Tibial artery (tissue), 4 donors: ENCODE measurements at regions of chr10 and their contacts with region 1.

Region 1: GRCh38 chr10:79068562-79069324 is at the start of gene ZMIZ1:
- DNase-seq: peak; percentile 94 to 95
- H3K4me3 ChIP-seq: peak within 1 kb of the TSS; percentile 70 to 95
- H3K27ac ChIP-seq: peak within 1 kb of the TSS; percentile 97 to 100
- H3K4me1 ChIP-seq: peaks cover 9 to 49% (median 37%) of the 10 kb centered on the region in 4 donors
- H3K27me3 ChIP-seq: no peaks in the 10 kb centered on the region
- CTCF ChIP-seq: peak; percentile 2 to 24

Region 2: DNA sequence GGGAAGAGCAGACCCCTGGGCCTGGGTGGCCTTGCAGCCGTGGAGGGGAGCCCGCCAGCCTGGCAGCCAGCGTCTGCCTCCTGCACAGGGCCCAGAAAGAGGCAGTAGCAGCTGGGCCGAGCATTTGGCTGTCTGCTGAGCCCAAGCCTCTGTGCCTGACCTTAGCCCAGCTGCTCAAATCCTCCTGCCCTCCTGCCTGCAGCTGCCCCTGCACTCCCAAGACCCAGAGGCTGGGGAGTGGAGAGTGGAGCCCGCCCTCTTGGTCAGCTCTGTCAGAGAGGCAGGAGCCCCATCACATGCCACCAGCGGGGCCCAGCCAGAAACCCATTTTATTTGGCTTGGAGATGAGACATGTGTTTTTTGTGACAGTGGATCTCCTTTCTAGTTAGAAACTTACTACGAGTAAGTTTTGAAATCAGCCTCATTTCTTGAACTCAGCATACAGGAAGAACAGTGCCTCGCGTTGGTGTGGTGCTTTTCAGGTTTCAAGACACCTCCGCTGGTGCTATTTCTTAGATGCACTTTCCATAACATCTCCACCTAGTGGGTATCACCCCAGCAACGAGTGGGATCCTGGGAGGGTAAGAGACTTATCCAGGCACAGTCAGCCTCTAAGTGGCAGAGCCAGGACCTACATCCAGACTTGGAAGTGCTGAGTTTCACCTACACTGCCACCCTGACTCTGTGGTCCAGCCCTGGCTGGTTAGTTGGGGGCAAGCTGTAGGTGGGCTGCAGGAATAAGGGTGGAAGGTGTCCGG is 558.0 kb before region 1 on chr10:
- intact Hi-C with region 1: no loop called
- DNase-seq: peak in 1 of 2 donors; percentile 59
- H3K4me3 ChIP-seq: no peak overlapping the region
- H3K27ac ChIP-seq: peak overlapping the region; percentile 42 to 47
- H3K4me1 ChIP-seq: peaks cover 0 to 68% (median 39%) of the 10 kb centered on the region in 4 donors
- H3K27me3 ChIP-seq: no peaks in the 10 kb centered on the region
- CTCF ChIP-seq: no peak

Region 3: DNA sequence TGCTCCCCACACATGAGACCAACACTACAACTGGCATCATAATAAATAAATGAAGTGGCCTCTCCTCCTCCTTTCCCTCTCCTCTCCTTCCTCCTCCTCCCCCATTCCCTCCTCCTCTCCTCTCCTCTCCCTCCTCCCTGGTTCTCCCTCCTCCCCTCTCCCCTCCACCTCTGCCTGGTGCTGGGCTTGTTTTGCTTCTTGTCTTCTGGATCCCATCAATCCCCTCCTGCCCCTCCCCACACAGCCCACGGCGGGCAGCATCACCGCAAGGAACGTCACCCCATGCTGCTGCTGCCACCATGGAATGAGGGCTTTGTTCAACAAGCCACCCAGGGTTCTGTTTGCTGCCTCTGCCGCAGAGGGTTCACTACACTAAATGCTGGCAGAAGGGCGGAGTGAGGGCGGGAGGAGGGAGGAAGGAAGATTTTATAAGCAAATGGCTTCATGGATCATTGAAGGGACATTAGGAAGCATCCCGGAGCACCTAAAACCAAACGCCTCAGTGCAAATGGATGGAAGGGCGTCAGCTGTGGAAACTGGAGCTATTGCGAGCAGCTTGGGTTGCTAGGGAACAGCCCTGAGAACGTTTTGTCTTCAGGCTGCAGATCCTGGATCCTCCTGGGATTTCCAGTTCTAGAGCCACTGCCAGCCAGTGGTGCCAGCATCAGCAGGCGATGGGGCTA is 379.7 kb before region 1 on chr10:
- intact Hi-C with region 1: loop called (anchors 5 kb)
- DNase-seq: peak; percentile 78 to 95
- H3K4me3 ChIP-seq: peak overlapping the region in 1 of 2 donors; percentile 30
- H3K27ac ChIP-seq: peak overlapping the region; percentile 76 to 87
- H3K4me1 ChIP-seq: peaks cover 0 to 44% (median 24%) of the 10 kb centered on the region in 4 donors
- H3K27me3 ChIP-seq: no peaks in the 10 kb centered on the region
- CTCF ChIP-seq: no peak

Region 4: DNA sequence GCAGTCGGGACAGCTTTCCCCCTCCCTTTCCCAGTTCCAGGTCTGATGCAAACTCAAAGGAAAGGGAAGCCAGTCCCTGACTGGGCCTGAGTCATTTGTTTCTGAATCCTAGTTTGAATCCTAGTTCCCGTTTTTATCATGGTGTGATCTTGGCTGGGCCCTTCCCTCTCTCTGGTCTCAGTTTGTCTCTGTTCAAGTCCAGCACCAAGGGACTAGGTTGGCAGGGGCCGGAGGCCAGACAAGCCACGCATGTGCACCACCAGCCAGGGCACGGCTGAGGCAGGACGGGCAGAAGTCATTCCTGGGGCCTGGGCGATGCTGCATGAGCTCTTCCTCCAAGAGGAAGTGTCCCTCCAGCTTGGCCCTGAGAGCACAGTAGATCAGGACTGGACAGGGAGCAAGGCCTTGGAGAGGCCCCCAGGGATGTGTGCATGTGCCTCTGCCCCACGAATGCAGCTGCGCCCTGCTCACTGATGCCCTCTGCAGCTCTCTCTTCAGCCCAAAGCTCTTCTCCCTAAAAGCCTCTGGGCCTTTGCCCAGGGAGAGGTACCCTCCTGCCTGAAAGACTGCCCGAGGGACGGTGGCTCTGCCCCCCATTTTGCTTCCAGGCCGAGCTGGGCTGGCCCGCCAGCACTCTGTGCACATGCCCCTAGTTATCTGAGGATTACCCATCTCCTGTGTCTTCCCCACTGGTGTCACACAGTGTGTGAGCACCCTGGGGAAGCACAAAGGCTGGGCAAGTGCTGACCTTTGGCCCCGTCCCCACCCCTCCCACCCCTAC is 86.7 kb after region 1 on chr10:
- intact Hi-C with region 1: loop called (anchors 5 kb)
- DNase-seq: peak; percentile 72 to 84
- H3K4me3 ChIP-seq: no peak overlapping the region
- H3K27ac ChIP-seq: peak overlapping the region; percentile 79 to 80
- H3K4me1 ChIP-seq: peaks cover 15 to 100% (median 93%) of the 10 kb centered on the region in 4 donors
- H3K27me3 ChIP-seq: no peaks in the 10 kb centered on the region
- CTCF ChIP-seq: peak in 1 of 2 experiments; percentile 6

Region 5: GRCh38 chr10:79331709-79332108 is 263.0 kb after region 1 on chr10:
- intact Hi-C with region 1: no loop called
- DNase-seq: no peak
- H3K4me3 ChIP-seq: no peak overlapping the region
- H3K27ac ChIP-seq: no peak overlapping the region
- H3K4me1 ChIP-seq: peaks cover 0 to 10% (median 7%) of the 10 kb centered on the region in 4 donors
- H3K27me3 ChIP-seq: no peaks in the 10 kb centered on the region
- CTCF ChIP-seq: no peak